ENCODE measurements at regions of chr12 and their contacts with region 1.

Region 1: DNA sequence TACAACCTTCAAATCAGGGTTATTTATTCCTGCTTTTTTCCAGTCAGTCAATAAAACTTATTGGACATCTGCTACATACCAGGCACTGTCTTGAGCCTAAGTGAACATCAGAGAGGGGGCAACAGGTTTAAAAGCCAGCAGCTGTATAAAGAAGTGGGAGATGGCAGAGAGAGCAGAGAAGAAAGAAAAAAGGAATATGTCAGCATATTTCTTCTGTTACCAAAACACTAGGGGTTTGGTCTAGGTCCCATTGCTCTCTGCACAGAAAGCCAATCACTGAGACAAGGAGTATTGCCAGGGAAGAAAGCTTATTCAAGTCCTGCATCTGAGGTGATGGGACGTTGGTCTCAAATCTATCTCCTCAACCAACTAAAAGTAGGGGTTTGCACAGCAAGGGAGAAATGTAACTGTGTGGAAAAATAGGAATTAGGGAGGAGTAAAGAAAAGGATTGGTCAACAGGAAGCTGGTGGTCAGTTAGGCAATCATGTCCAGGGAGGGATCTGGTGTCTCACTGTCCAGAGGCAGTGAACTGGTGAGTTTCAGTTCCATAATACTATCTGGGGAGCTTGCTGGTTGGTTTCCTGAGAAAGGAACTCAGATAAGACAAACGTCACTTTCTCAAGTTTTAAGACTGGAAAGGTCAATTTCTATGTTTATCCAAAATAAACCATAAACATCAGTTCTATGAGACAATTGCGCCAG is 107.5 kb downstream of the PHLDA1 start:
- DNase-seq: no peak
- H3K4me3 ChIP-seq: no peak overlapping the region
- CTCF ChIP-seq: no peak

Region 2: GRCh38 chr12:75883241-75883640 is 40.9 kb before region 1 on chr12:
- in situ Hi-C with region 1: loop called (anchors 5 kb)
- DNase-seq: no peak
- H3K4me3 ChIP-seq: no peak overlapping the region
- CTCF ChIP-seq: no peak

Region 3: DNA sequence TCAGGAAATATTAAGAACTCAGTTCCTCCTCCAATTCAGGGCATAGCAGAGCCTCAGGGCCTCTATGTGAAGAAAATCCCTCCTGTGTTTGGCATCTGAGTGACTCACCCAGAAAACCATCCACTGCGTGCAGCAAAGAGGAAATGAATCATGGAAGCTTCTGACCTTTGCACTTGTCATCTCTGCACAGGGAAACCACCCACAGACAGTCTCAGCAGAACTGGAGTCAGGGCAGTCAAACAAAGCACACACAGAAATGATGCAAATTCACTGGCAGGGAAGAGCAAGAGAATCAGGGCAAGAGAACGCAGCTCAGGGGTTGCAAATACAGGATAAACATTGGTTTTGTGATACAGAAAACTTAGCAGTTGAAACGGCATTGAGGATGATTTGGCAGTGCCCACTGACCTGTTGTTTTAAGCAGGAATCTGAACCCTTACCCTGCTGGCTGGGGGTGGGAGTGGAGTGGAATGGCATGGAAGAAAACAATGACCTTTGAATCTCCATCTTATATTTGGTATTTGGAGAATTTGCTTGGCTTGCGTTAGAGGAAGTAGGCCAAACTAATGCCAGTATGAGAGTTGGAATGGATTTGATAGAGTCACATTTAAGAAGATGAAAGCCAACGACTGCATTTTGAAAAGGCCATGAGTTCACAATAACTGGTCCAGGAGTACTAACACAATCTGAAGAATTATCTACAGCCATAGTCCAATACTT is 54.0 kb after region 1 on chr12:
- in situ Hi-C with region 1: no loop called
- DNase-seq: peak; percentile 98
- H3K4me3 ChIP-seq: no peak overlapping the region
- CTCF ChIP-seq: no peak